Panc1 (cell line): ENCODE measurements at regions of chr17 and their contacts with region 1.

Region 1: GRCh38 chr17:66248285-66248684 is 19.1 kb upstream of the APOH start:
- DNase-seq: no peak
- ATAC-seq: no peak
- H3K4me3 ChIP-seq: no peak overlapping the region
- H3K27ac ChIP-seq: no peak overlapping the region
- H3K4me1 ChIP-seq: no peaks in the 10 kb centered on the region
- H3K27me3 ChIP-seq: no peaks in the 10 kb centered on the region
- CTCF ChIP-seq: no peak

Region 2: GRCh38 chr17:66211047-66211799 is 37.1 kb before region 1 on chr17:
- CTCF ChIA-PET with region 1: no interaction called
- POLR2A ChIA-PET with region 1: interaction called, 13 read pairs
- in situ Hi-C with region 1: no loop called
- intact Hi-C with region 1: no loop called
- DNase-seq: no peak
- ATAC-seq: no peak
- H3K4me3 ChIP-seq: no peak overlapping the region
- H3K27ac ChIP-seq: no peak overlapping the region
- H3K4me1 ChIP-seq: no peaks in the 10 kb centered on the region
- H3K27me3 ChIP-seq: no peaks in the 10 kb centered on the region
- CTCF ChIP-seq: no peak

Region 3: GRCh38 chr17:66275651-66276050 is 27.4 kb after region 1 on chr17:
- CTCF ChIA-PET with region 1: no interaction called
- POLR2A ChIA-PET with region 1: no interaction called
- in situ Hi-C with region 1: no loop called
- intact Hi-C with region 1: no loop called
- DNase-seq: peak; percentile 81
- ATAC-seq: peak; percentile 96
- H3K4me3 ChIP-seq: no peak overlapping the region
- H3K27ac ChIP-seq: peak overlapping the region; percentile 86
- H3K4me1 ChIP-seq: peaks cover 28% of the 10 kb centered on the region
- H3K27me3 ChIP-seq: no peaks in the 10 kb centered on the region
- CTCF ChIP-seq: no peak